ENCODE measurements at regions of chr20 and their contacts with region 1.

Region 1: GRCh38 chr20:47677635-47678453 is 107.4 kb downstream of the SULF2 start:
- DNase-seq: peak; percentile 69
- ATAC-seq: peak; percentile 64
- H3K4me3 ChIP-seq: no peak overlapping the region
- H3K27ac ChIP-seq: no peak overlapping the region
- H3K4me1 ChIP-seq: peaks cover 40% of the 10 kb centered on the region
- H3K27me3 ChIP-seq: no peaks in the 10 kb centered on the region
- CTCF ChIP-seq: peak; percentile 100
- EP300 ChIP-seq: no peak
- POLR2A ChIP-seq: no peak
- RAD21 ChIP-seq: peak; percentile 99

Region 2: DNA sequence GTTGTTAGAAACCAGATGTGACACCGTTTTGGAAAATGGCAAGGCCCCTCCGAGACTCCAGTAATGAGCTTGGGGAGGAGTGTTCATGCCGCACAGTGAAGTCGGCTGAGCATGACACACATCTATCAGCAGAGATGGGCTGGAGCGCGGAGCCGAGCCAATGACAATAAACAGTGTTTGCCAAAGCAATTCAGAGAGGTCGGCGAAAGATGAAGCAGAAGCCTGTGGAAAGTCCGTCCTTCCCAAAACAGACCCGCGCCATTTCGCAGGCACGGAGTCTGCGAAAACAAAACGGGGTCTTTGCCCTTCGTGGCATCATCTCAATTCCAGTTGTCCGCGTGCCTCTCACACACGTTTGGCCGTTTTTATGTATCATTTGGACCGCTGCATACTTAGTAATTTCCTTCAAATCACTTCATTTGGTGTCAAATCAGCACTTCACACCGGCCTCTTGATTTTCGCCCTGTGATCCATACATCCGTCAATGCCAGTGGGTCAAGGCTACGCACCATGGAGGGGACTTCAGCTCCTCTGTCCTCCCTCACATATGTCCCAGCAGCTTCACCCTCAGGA is 36.1 kb after region 1 on chr20:
- CTCF ChIA-PET with region 1: interaction called, 19 read pairs
- POLR2A ChIA-PET with region 1: no interaction called
- in situ Hi-C with region 1: loop called (anchors 5 kb)
- intact Hi-C with region 1: loop called (anchors 1 kb)
- DNase-seq: peak; percentile 82
- ATAC-seq: peak; percentile 54
- H3K4me3 ChIP-seq: peak overlapping the region in 2 of 3 experiments; percentile 9 to 45; a peak in 3 of 6 replicates
- H3K27ac ChIP-seq: no peak overlapping the region
- H3K4me1 ChIP-seq: peaks cover 58% of the 10 kb centered on the region
- H3K27me3 ChIP-seq: no peaks in the 10 kb centered on the region
- CTCF ChIP-seq: peak; percentile 5; the same call in 1 of the 2 replicates
- EP300 ChIP-seq: no peak
- POLR2A ChIP-seq: no peak
- RAD21 ChIP-seq: peak; percentile 28; the same call in 1 of the 2 replicates

Region 3: GRCh38 chr20:47725248-47725973 is 47.6 kb after region 1 on chr20:
- CTCF ChIA-PET with region 1: interaction called, 9 read pairs
- POLR2A ChIA-PET with region 1: no interaction called
- in situ Hi-C with region 1: no loop called
- intact Hi-C with region 1: loop called (anchors 5 kb)
- DNase-seq: peak; percentile 98
- ATAC-seq: peak; percentile 95
- H3K4me3 ChIP-seq: no peak overlapping the region
- H3K27ac ChIP-seq: no peak overlapping the region
- H3K4me1 ChIP-seq: peaks cover 23% of the 10 kb centered on the region
- H3K27me3 ChIP-seq: no peaks in the 10 kb centered on the region
- CTCF ChIP-seq: peak; percentile 98
- EP300 ChIP-seq: peak in 1 of 2 experiments; percentile 29; a peak in 2 of 4 replicates
- POLR2A ChIP-seq: no peak
- RAD21 ChIP-seq: peak; percentile 94